K562 (cell line): ENCODE measurements at regions of chr16 and their contacts with region 1.

Region 1: DNA sequence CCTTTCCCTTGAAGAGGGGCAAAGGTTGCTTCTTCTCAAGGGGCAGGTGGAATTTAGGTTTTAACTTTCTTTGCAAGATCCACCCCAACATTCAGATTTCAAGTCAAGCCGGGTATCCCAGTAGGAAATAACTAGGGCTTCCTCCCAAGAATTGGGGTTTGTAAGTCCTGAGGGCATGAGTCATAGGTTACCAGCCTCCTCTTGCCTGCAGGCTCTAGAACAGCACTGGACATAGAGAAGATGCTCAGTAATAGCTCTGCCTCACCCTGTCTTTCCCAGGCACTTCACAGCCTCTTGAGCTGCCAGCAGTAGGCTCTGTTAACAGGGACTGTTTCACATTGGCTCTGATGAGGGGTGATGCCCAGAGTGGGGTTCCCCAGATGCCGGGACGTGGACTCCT is 35.8 kb upstream of the ZFP90 start:
- DNase-seq: no peak
- ATAC-seq: no peak
- H3K4me3 ChIP-seq: no peak overlapping the region
- H3K27ac ChIP-seq: no peak overlapping the region
- H3K4me1 ChIP-seq: no peaks in the 10 kb centered on the region
- H3K27me3 ChIP-seq: peaks cover 8 to 70% of the 10 kb centered on the region in 2 experiments; a peak in 4 of 5 replicates
- CTCF ChIP-seq: no peak
- EP300 ChIP-seq: no peak
- POLR2A ChIP-seq: no peak
- RAD21 ChIP-seq: no peak

Region 2: DNA sequence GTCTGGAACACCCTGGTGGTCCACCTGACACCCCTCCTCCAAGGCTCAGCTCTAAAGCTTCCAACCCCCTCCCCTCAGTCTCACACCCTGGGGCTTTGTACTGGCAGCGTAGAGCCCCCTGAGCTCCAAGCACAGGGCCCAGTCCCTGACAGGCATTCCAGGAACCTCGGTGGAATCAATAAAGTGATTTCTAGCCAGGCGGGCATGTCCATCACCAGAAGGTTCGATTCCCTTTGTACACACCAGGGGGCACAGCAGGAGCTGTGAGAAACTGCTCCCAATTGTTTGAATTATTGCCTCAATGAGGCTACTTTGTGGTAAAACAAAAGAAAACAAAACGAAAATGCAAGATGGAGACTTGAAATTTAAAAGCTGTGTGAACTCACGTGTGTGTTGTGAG is 106.9 kb before region 1 on chr16:
- CTCF ChIA-PET with region 1: no interaction called
- POLR2A ChIA-PET with region 1: no interaction called
- in situ Hi-C with region 1: no loop called
- intact Hi-C with region 1: loop called (anchors 10 kb)
- DNase-seq: peak in 1 of 4 experiments; percentile 35
- ATAC-seq: peak; percentile 73
- H3K4me3 ChIP-seq: no peak overlapping the region
- H3K27ac ChIP-seq: no peak overlapping the region
- H3K4me1 ChIP-seq: no peaks in the 10 kb centered on the region; a peak in 1 of 5 replicates
- H3K27me3 ChIP-seq: peaks cover 7 to 39% of the 10 kb centered on the region in 2 experiments; a peak in 2 of 5 replicates
- CTCF ChIP-seq: peak; percentile 58 to 70 (median 68)
- EP300 ChIP-seq: no peak
- POLR2A ChIP-seq: no peak
- RAD21 ChIP-seq: peak; percentile 20 to 65; a peak in 3 of 4 replicates